ENCODE measurements at regions of chr22 and their contacts with region 1.

Region 1: DNA sequence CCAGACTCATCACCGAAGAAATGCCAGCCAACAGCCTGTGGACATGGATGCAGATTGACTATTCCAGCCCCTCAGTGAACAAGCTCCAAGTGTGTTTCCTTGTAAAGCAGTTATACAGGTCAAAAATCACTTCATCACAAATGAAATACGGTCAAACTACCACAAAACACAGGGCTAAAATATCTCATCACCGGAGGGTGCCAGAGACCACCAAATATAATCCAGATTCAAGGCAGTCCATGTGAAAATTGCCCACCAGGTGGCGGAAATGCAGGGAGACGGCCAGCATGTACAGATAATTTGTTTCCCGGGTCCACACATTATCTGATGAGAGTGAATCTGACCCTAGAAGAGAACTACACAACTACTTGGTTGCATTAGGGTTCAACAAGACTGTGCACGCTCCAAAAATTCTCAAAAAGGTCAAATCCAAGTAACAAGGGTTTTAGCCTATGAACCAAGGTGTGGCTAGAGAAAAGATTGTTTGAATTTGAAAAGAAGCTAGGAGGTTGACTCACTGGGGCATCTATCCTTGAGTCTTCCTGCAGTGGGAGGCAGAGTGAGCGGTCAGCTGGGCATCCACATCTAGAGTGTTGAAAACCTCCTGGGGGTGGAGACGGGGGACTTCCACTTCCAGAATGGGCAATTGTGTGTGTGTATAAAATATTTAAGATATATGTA is 71.7 kb downstream of the IGLL5 start:
- DNase-seq: peak; percentile 48 to 89 (median 80)
- ATAC-seq: peak; percentile 60
- H3K4me3 ChIP-seq: no peak overlapping the region
- H3K4me3 Mint-ChIP-seq: no peak overlapping the region
- H3K27ac ChIP-seq: no peak overlapping the region
- H3K27ac Mint-ChIP-seq: no peak overlapping the region
- H3K4me1 ChIP-seq: no peaks in the 10 kb centered on the region
- H3K4me1 Mint-ChIP-seq: peaks cover 5% of the 10 kb centered on the region
- H3K27me3 ChIP-seq: no peaks in the 10 kb centered on the region
- H3K27me3 Mint-ChIP-seq: peaks cover 10% of the 10 kb centered on the region
- CTCF ChIP-seq: peak; percentile 98

Region 2: GRCh38 chr22:22085702-22086500 is 873.4 kb before region 1 on chr22:
- CTCF ChIA-PET with region 1: no interaction called
- POLR2A ChIA-PET with region 1: no interaction called
- intact Hi-C with region 1: no loop called
- DNase-seq: peak in 1 of 9 experiments; percentile 21
- ATAC-seq: no peak
- H3K4me3 ChIP-seq: no peak overlapping the region
- H3K4me3 Mint-ChIP-seq: no peak overlapping the region
- H3K27ac ChIP-seq: no peak overlapping the region
- H3K27ac Mint-ChIP-seq: no peak overlapping the region
- H3K4me1 ChIP-seq: no peaks in the 10 kb centered on the region
- H3K4me1 Mint-ChIP-seq: no peaks in the 10 kb centered on the region
- H3K27me3 ChIP-seq: peaks cover 0 to 2% of the 10 kb centered on the region in 2 experiments
- H3K27me3 Mint-ChIP-seq: peaks cover 22% of the 10 kb centered on the region
- CTCF ChIP-seq: no peak

Region 3: DNA sequence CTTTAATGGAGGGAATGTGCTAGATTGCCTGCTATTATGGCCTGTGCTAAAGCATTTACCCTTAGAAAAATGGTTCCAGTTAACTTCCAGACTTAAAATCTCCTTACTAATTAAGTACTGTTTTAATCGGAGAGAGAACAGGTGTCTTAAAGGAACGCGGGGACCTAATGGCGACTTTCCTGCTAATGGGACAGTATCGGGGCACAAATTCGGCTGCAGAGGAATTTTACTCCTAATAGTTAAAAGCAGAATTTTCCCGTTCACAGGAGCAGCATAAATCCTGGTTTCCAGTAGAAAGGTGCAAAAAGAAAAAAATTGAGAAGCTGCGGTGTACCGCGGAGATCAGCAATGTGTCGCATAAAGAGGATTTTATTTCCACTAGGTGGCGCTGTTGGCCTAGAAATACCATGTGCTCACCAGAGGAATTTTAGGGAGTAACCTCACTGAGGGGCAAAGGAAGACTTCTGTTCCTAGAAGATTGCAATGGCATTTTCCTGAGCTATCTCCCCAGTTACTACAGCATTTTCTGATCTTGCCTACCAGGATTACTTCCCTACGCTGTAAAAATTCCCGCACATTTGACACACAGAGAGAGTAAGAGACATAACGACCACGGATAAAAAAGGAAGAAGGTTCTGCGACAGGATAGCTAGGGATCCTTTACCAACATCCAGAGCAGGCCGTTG is 495.3 kb before region 1 on chr22:
- CTCF ChIA-PET with region 1: interaction called, 4 read pairs
- POLR2A ChIA-PET with region 1: no interaction called
- intact Hi-C with region 1: loop called (anchors 2 to 5 kb)
- DNase-seq: peak in 8 of 9 experiments; percentile 21 to 73 (median 48)
- ATAC-seq: no peak
- H3K4me3 ChIP-seq: no peak overlapping the region
- H3K4me3 Mint-ChIP-seq: no peak overlapping the region
- H3K27ac ChIP-seq: no peak overlapping the region
- H3K27ac Mint-ChIP-seq: no peak overlapping the region
- H3K4me1 ChIP-seq: no peaks in the 10 kb centered on the region
- H3K4me1 Mint-ChIP-seq: no peaks in the 10 kb centered on the region
- H3K27me3 ChIP-seq: peaks cover 0 to 4% of the 10 kb centered on the region in 2 experiments
- H3K27me3 Mint-ChIP-seq: peaks cover 34% of the 10 kb centered on the region
- CTCF ChIP-seq: peak; percentile 78

Region 4: GRCh38 chr22:22710719-22711531 is 248.4 kb before region 1 on chr22:
- CTCF ChIA-PET with region 1: interaction called, 26 read pairs
- POLR2A ChIA-PET with region 1: interaction called, 3 read pairs
- intact Hi-C with region 1: loop called (anchors 1 kb)
- DNase-seq: peak; percentile 61 to 90 (median 79)
- ATAC-seq: peak; percentile 70
- H3K4me3 ChIP-seq: no peak overlapping the region
- H3K4me3 Mint-ChIP-seq: no peak overlapping the region
- H3K27ac ChIP-seq: no peak overlapping the region
- H3K27ac Mint-ChIP-seq: no peak overlapping the region
- H3K4me1 ChIP-seq: no peaks in the 10 kb centered on the region
- H3K4me1 Mint-ChIP-seq: no peaks in the 10 kb centered on the region
- H3K27me3 ChIP-seq: no peaks in the 10 kb centered on the region
- H3K27me3 Mint-ChIP-seq: no peaks in the 10 kb centered on the region
- CTCF ChIP-seq: peak; percentile 87

Region 5: GRCh38 chr22:22802339-22802970 is 156.8 kb before region 1 on chr22:
- CTCF ChIA-PET with region 1: interaction called, 7 read pairs
- POLR2A ChIA-PET with region 1: no interaction called
- intact Hi-C with region 1: loop called in 1 of 2 experiments (anchors 5 kb)
- DNase-seq: peak in 8 of 9 experiments; percentile 37 to 77 (median 58)
- ATAC-seq: peak; percentile 86
- H3K4me3 ChIP-seq: no peak overlapping the region
- H3K4me3 Mint-ChIP-seq: no peak overlapping the region
- H3K27ac ChIP-seq: no peak overlapping the region
- H3K27ac Mint-ChIP-seq: peak overlapping the region; percentile 18
- H3K4me1 ChIP-seq: no peaks in the 10 kb centered on the region
- H3K4me1 Mint-ChIP-seq: peaks cover 48% of the 10 kb centered on the region
- H3K27me3 ChIP-seq: no peaks in the 10 kb centered on the region
- H3K27me3 Mint-ChIP-seq: no peaks in the 10 kb centered on the region
- CTCF ChIP-seq: peak; percentile 80

Region 6: DNA sequence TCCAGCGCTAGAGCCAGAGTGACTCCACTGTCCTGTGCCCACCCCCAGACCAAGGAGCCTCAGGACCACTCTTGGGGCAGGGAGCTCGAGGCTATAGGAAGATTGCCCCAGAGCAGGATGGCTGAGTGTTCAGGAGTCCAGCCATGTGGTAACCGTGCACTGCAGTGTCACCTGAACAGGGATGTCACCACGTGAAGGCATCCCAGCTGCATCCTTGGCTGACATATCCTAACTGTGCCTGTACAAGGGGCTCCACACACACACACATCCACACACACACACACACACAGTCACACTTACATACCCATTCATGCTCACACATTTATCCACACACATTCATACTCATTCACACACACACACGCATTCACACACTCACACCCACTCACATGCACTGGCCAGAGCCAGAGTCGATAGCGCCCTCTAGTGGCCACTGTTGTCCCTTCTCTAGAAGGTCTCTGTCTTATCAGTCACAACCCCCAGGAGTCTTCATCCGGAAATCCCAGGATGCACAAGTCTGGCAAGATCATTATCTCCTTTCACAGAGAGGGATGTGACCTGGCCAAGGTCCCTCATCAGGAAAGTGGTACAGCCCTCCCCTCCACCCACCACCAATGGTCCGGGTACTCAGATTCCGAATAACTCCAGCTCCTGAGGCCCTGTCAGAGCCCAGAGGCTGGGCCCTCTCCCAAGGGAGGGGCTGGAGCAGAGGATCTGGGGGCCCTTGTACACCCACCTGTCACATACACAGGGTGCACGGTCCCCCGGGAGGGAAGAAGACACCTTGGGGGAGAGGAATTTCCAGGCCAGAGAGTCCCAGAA is 16.6 kb before region 1 on chr22:
- CTCF ChIA-PET with region 1: interaction called, 69 read pairs
- POLR2A ChIA-PET with region 1: no interaction called
- intact Hi-C with region 1: no loop called
- DNase-seq: peak; percentile 52 to 83 (median 79)
- ATAC-seq: peak; percentile 78
- H3K4me3 ChIP-seq: no peak overlapping the region
- H3K4me3 Mint-ChIP-seq: no peak overlapping the region
- H3K27ac ChIP-seq: no peak overlapping the region
- H3K27ac Mint-ChIP-seq: peak overlapping the region; percentile 4
- H3K4me1 ChIP-seq: no peaks in the 10 kb centered on the region
- H3K4me1 Mint-ChIP-seq: peaks cover 2% of the 10 kb centered on the region
- H3K27me3 ChIP-seq: no peaks in the 10 kb centered on the region
- H3K27me3 Mint-ChIP-seq: no peaks in the 10 kb centered on the region
- CTCF ChIP-seq: peak; percentile 76

Region 7: DNA sequence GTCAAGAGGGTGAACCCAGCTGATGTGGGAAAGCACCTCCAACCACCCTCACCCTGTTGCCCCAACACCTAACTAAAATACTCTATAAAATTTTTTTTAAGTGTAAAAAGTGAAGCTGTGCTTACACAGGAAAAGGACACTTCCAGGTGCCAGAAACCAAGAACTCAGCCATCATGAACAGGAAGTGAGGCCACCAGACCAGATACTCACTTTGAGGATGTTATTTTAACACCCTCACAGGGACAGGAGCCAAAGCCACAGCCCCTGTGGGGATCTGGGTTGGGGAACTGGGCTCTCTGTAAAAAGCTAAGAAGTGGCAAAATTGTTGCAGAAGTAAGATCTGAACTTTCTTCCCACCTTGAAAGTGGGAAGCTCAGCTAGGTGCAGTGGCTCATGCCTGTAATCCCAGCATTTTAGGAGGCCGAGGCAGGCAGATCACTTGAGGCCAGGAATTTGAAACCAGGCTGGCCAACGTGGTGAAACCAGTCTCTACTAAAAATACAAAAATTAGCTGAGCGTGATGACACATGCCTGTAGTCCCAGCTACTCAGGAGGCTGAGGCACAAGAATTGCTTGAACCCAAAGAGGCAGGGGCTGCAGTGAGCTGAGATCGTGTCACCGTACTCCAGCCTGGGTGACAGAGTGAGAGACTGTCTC is 178.7 kb after region 1 on chr22:
- CTCF ChIA-PET with region 1: interaction called, 498 read pairs
- POLR2A ChIA-PET with region 1: interaction called, 4 read pairs
- intact Hi-C with region 1: no loop called
- DNase-seq: peak in 8 of 9 experiments; percentile 34 to 93 (median 65)
- ATAC-seq: peak; percentile 43
- H3K4me3 ChIP-seq: no peak overlapping the region
- H3K4me3 Mint-ChIP-seq: peak overlapping the region; percentile 61
- H3K27ac ChIP-seq: peak overlapping the region; percentile 55 to 88
- H3K27ac Mint-ChIP-seq: peak overlapping the region; percentile 94
- H3K4me1 ChIP-seq: peaks cover 61% of the 10 kb centered on the region
- H3K4me1 Mint-ChIP-seq: peaks cover 62% of the 10 kb centered on the region
- H3K27me3 ChIP-seq: no peaks in the 10 kb centered on the region
- H3K27me3 Mint-ChIP-seq: no peaks in the 10 kb centered on the region
- CTCF ChIP-seq: no peak

Region 8: DNA sequence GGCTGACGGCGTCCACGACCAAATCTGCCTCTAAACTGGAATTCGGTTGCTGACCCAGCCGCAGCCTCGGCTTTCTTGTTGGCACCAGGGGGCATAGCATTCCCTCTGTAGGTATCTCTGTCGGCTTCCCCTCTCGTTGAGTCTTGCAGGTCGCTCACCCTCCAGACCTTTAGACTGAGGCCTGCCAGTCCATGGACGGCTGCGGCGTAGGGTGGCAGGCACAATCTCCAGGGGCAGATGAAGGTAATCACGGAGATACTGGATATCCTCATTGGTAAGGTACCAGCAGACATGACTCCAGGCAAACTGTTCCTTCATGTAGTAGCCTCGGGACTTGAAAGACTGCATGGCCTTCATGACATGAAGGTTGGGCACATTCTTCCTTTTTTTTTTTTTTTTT is 363.3 kb after region 1 on chr22:
- CTCF ChIA-PET with region 1: no interaction called
- POLR2A ChIA-PET with region 1: no interaction called
- intact Hi-C with region 1: no loop called
- DNase-seq: no peak
- ATAC-seq: no peak
- H3K4me3 ChIP-seq: no peak overlapping the region
- H3K4me3 Mint-ChIP-seq: no peak overlapping the region
- H3K27ac ChIP-seq: no peak overlapping the region
- H3K27ac Mint-ChIP-seq: no peak overlapping the region
- H3K4me1 ChIP-seq: no peaks in the 10 kb centered on the region
- H3K4me1 Mint-ChIP-seq: no peaks in the 10 kb centered on the region
- H3K27me3 ChIP-seq: no peaks in the 10 kb centered on the region
- H3K27me3 Mint-ChIP-seq: no peaks in the 10 kb centered on the region
- CTCF ChIP-seq: no peak

Region 9: DNA sequence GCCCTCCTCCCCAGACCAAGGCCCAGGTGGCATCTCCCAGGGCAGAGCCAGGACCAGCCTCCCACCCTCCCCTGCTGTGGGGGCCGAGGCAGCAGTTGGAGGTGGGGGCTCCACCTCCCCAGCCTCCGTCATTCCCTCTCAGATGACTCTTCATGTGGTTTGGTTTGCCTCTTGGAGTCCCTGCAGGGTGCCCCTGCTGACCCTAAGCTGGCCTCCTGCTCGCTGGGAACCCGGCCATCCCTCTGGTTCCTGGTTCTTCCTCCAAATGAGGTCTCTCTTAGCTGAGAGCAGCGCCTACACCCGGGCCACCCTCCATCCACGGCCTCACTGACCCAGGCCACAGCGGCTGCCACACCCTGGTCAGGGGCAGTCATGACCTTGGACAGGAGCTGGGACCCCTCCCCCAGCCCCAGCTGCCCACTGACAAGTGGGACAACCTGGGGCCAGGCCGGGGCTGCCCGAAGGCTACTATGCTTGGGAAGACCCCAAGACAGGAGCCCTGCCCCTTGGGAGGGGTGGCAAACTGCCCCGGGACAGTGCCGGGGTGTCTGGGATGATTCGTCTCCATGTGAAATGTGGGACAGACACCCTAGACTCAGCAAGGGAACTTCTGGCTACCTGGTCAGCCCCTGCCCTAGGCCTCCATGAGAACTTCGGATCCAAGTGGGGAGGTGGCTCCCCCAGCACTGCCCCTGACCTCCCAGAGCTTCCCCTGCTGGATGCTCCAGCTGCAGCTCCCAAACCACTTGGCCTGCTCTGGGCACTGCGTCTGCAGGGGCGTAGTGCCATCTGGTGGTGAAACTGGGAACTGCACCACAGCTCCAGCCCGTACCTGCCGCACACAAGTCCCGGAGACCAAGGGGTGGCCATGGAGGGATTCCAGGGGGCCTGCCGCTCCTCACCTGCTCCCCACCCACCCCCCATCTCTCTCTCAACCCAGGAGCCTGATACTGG is 426.3 kb after region 1 on chr22:
- CTCF ChIA-PET with region 1: interaction called, 48 read pairs
- POLR2A ChIA-PET with region 1: no interaction called
- intact Hi-C with region 1: loop called in 1 of 2 experiments (anchors 1 kb)
- DNase-seq: peak; percentile 64 to 89 (median 82)
- ATAC-seq: peak; percentile 86
- H3K4me3 ChIP-seq: no peak overlapping the region
- H3K4me3 Mint-ChIP-seq: no peak overlapping the region
- H3K27ac ChIP-seq: no peak overlapping the region
- H3K27ac Mint-ChIP-seq: no peak overlapping the region
- H3K4me1 ChIP-seq: no peaks in the 10 kb centered on the region
- H3K4me1 Mint-ChIP-seq: peaks cover 2% of the 10 kb centered on the region
- H3K27me3 ChIP-seq: peaks cover 0 to 5% of the 10 kb centered on the region in 2 experiments
- H3K27me3 Mint-ChIP-seq: peaks cover 2% of the 10 kb centered on the region
- CTCF ChIP-seq: peak; percentile 95